ENCODE measurements at regions of chr10 and their contacts with region 1.

Region 1: DNA sequence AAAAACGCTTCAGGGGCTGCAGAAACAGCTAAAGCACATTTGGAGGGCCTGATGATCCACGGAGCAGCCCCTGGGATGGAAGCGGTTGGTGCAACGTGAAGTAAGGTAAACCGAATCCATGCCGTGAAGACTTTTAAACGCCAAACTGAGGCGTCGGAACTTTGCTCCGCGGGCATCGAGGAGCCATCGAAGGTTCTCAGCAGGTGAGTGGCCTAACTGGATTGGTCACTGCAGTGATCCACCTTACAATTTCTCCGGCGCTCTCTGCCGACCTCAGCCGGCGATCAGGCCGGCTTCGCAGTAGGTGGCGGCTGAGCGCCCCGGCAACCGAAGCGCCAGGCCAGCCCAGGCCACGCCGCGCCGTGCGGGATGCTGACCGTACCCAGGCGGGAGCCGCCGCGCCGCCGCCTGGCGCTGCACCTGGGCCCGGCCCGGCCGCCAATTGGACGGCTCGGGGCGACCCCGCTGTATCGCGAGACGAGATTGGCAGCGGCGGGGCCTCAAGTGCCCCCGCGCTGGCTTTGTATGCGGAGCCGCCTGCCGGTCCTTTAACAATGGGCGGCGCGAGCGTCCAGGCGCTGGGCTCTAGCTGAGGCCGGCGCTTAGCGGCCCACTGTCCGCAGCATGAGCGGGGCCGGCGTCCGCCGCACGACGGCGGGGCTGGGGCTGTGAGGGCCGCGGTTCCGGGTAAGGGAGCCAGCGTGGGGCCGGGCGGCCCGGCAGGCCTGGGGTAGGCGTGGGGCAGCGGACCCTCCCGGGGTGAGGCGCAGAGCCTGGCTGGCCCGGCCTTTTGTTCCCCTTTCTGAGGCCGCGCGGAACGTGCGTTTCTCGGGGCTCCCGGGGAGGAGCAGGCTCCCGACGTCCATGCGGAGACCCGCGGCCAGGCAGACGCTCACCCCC is at the start of gene CCNJ:
- DNase-seq: peak; percentile 81 to 97 (median 86)
- ATAC-seq: peak; percentile 93
- H3K4me3 ChIP-seq: peak within 1 kb of the TSS; percentile 75
- H3K27ac ChIP-seq: peak within 1 kb of the TSS; percentile 89
- H3K4me1 ChIP-seq: peaks cover 11 to 16% of the 10 kb centered on the region in 2 experiments; a peak in 4 of 5 replicates
- H3K27me3 ChIP-seq: no peaks in the 10 kb centered on the region
- CTCF ChIP-seq: peak in 2 of 3 experiments; percentile 16 to 23; a peak in 2 of 6 replicates
- EP300 ChIP-seq: no peak
- POLR2A ChIP-seq: peak; percentile 73
- RAD21 ChIP-seq: peak; percentile 5 to 23; a peak in 1 of 4 replicates
- polyA plus RNA-seq, gene CCNJ: 0.69 to 2.4 TPM

Region 2: DNA sequence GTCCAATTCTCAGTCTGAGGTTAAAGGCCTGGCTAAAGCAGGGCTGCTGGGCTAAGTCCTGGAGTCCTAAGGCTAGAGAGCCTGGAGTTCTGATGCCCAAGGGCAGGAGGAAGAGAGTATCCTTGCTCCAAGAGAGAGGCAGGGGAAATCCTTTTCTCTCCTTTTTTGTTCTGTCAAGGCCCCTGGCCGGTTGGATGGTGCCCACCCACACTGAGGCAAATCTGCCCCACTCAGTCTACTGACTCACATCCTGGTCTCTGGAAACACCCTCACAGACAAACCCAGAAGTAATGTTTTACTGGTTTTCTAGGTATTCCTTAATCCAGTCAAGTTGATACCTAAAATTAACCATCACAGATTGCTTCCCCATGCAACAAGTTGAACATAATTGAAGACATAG is 109.8 kb after region 1 on chr10:
- CTCF ChIA-PET with region 1: no interaction called
- POLR2A ChIA-PET with region 1: no interaction called
- in situ Hi-C with region 1: no loop called
- intact Hi-C with region 1: loop called (anchors 5 kb)
- DNase-seq: no peak
- ATAC-seq: no peak
- H3K4me3 ChIP-seq: no peak overlapping the region
- H3K27ac ChIP-seq: no peak overlapping the region
- H3K4me1 ChIP-seq: no peaks in the 10 kb centered on the region
- H3K27me3 ChIP-seq: no peaks in the 10 kb centered on the region
- CTCF ChIP-seq: no peak
- EP300 ChIP-seq: no peak
- POLR2A ChIP-seq: no peak
- RAD21 ChIP-seq: no peak

Region 3: GRCh38 chr10:96229568-96230030 is 186.3 kb after region 1 on chr10:
- CTCF ChIA-PET with region 1: no interaction called
- POLR2A ChIA-PET with region 1: no interaction called
- in situ Hi-C with region 1: no loop called
- intact Hi-C with region 1: loop called (anchors 10 kb)
- DNase-seq: peak; percentile 53 to 78 (median 64)
- ATAC-seq: peak; percentile 85
- H3K4me3 ChIP-seq: no peak overlapping the region
- H3K27ac ChIP-seq: no peak overlapping the region
- H3K4me1 ChIP-seq: no peaks in the 10 kb centered on the region; a peak in 1 of 5 replicates
- H3K27me3 ChIP-seq: peaks cover 2 to 21% of the 10 kb centered on the region in 2 experiments; a peak in 3 of 5 replicates
- CTCF ChIP-seq: peak; percentile 80 to 96 (median 92)
- EP300 ChIP-seq: no peak
- POLR2A ChIP-seq: no peak
- RAD21 ChIP-seq: peak; percentile 39 to 69; a peak in 3 of 4 replicates

Measured in K562 (cell line).